CD4-positive, alpha-beta memory T cell (primary cell): ENCODE measurements at regions of chr2 and their contacts with region 1.

Region 1: GRCh38 chr2:203718087-203718486 is 11.6 kb downstream of the CD28 start:
- DNase-seq: peak; percentile 65 to 82 (median 70)
- H3K4me3 ChIP-seq: peak overlapping the region in 1 of 2 donors; percentile 32
- H3K4me3 Mint-ChIP-seq: peak overlapping the region; percentile 75 to 92 (median 80)
- H3K27ac ChIP-seq: peak overlapping the region; percentile 52
- H3K27ac Mint-ChIP-seq: peak overlapping the region; percentile 94 to 98 (median 95)
- H3K4me1 ChIP-seq: peaks cover 100% of the 10 kb centered on the region
- H3K4me1 Mint-ChIP-seq: peaks cover 86 to 99% (median 93%) of the 10 kb centered on the region in 4 donors
- H3K27me3 ChIP-seq: no peaks in the 10 kb centered on the region
- H3K27me3 Mint-ChIP-seq: no peaks in the 10 kb centered on the region

Region 2: DNA sequence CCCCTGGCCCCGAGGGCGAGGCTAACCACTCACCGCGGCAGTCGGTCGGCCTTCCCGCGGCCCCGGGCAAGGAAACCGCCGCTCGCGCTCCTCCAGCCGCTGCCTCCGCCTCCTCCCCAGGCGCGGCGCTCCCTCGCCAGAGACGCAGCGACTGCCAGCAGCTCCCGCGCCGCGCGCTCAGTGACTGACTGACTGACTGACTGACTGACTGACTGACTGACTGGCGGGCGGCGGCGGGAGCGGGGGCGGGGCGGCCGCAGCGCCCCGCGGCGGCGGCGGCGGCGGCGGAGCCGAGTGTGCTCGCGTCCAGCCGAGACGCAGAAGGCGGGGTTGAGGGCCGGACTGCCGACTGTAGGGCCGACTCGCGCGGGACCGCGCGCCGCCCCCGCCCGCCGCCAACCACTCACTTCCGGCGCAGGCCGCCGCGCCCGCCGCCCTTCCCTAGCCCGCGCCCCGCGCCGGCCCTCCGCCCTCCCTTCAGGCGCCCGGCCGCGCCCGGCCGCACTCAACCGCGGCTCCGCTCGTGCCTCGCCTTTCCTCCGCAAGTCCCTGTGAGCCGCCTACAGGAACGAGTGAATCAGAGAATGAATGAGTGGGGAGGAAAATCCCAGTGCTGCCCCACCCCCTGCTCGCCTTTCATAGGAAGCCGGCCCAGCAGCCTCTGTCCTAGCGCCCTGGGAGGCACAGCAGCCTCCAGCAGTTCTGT is 182.9 kb before region 1 on chr2 and contains the start of gene RAPH1:
- CTCF ChIA-PET with region 1: no interaction called
- POLR2A ChIA-PET with region 1: interaction called, 16 read pairs
- intact Hi-C with region 1: no loop called
- DNase-seq: peak; percentile 39 to 67 (median 56)
- H3K4me3 ChIP-seq: peak within 1 kb of the TSS; percentile 20 to 58
- H3K4me3 Mint-ChIP-seq: peak within 1 kb of the TSS; percentile 86 to 95 (median 91)
- H3K27ac ChIP-seq: no peak within 1 kb of the TSS
- H3K27ac Mint-ChIP-seq: peak within 1 kb of the TSS; percentile 72 to 89 (median 79)
- H3K4me1 ChIP-seq: peaks cover 16% of the 10 kb centered on the region
- H3K4me1 Mint-ChIP-seq: peaks cover 14 to 29% (median 21%) of the 10 kb centered on the region in 4 donors
- H3K27me3 ChIP-seq: no peaks in the 10 kb centered on the region
- H3K27me3 Mint-ChIP-seq: peaks cover 8% of the 10 kb centered on the region in 2 donors
- total RNA-seq, gene RAPH1: 2.1 to 2.6 TPM

Region 3: GRCh38 chr2:203730076-203730729 is 12.1 kb after region 1 on chr2:
- CTCF ChIA-PET with region 1: interaction called, 35 read pairs
- POLR2A ChIA-PET with region 1: interaction called, 794 read pairs
- intact Hi-C with region 1: loop called (anchors 1 kb)
- DNase-seq: no peak
- H3K4me3 ChIP-seq: no peak overlapping the region
- H3K4me3 Mint-ChIP-seq: peak overlapping the region; percentile 31 to 82 (median 70)
- H3K27ac ChIP-seq: peak overlapping the region; percentile 30
- H3K27ac Mint-ChIP-seq: peak overlapping the region; percentile 76 to 92 (median 88)
- H3K4me1 ChIP-seq: peaks cover 94% of the 10 kb centered on the region
- H3K4me1 Mint-ChIP-seq: peaks cover 76 to 95% (median 85%) of the 10 kb centered on the region in 4 donors
- H3K27me3 ChIP-seq: no peaks in the 10 kb centered on the region
- H3K27me3 Mint-ChIP-seq: no peaks in the 10 kb centered on the region

Region 4: DNA sequence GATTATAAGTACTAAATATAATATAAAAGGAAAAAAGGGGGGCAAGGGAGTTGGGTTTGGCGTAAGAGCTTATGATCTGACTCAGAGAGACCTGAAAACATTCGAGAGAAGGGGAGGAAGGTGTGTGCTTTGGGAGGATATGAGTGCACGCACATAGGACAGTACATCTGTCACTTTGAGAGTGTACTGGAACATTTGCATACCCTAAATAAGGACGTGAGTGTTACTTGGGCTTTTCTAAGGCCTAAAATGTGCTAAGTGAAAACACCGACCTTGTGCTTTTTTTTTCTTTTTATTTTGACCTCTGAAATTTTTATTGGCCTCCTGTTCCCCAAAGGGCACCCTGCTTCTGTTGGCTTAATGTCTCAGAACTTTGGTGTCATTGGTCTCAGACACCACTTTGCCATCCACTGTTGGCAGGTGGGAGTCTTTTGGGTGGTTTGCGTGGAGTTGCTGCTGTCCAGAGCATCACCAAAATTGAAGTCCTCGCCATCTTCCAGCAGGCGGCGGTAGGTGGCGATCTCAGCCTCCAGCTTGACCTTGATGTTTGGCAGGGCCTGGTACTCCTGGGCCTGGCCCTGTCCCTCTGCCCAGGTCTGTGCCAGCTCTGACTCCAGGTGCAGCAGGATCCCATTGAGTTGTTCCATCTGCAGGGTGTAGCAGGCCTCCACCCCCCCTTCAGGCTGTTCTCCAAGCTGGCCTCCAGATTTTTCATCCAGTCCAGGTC is 46.0 kb after region 1 on chr2:
- CTCF ChIA-PET with region 1: no interaction called
- POLR2A ChIA-PET with region 1: interaction called, 11 read pairs
- intact Hi-C with region 1: no loop called
- DNase-seq: peak in 1 of 5 donors; percentile 15
- H3K4me3 ChIP-seq: no peak overlapping the region
- H3K4me3 Mint-ChIP-seq: peak overlapping the region in 7 of 8 donors; percentile 4 to 59 (median 44)
- H3K27ac ChIP-seq: no peak overlapping the region
- H3K27ac Mint-ChIP-seq: peak overlapping the region; percentile 61 to 87 (median 80)
- H3K4me1 ChIP-seq: peaks cover 68% of the 10 kb centered on the region
- H3K4me1 Mint-ChIP-seq: peaks cover 50 to 78% (median 66%) of the 10 kb centered on the region in 4 donors
- H3K27me3 ChIP-seq: no peaks in the 10 kb centered on the region
- H3K27me3 Mint-ChIP-seq: no peaks in the 10 kb centered on the region

Region 5: GRCh38 chr2:203871371-203871983 is 153.4 kb after region 1 on chr2:
- CTCF ChIA-PET with region 1: no interaction called
- POLR2A ChIA-PET with region 1: interaction called, 10 read pairs
- intact Hi-C with region 1: no loop called
- DNase-seq: no peak
- H3K4me3 ChIP-seq: peak overlapping the region; percentile 17 to 54
- H3K4me3 Mint-ChIP-seq: peak overlapping the region; percentile 85 to 95 (median 90)
- H3K27ac ChIP-seq: peak overlapping the region; percentile 59
- H3K27ac Mint-ChIP-seq: peak overlapping the region; percentile 41 to 89 (median 81)
- H3K4me1 ChIP-seq: peaks cover 84% of the 10 kb centered on the region
- H3K4me1 Mint-ChIP-seq: peaks cover 58 to 87% (median 74%) of the 10 kb centered on the region in 4 donors
- H3K27me3 ChIP-seq: no peaks in the 10 kb centered on the region
- H3K27me3 Mint-ChIP-seq: no peaks in the 10 kb centered on the region